AG04450 (cell line): ENCODE measurements at regions of chr12 and their contacts with region 1.

Region 1: GRCh38 chr12:111396726-111397445 is 8.8 kb upstream of the SH2B3 start:
- DNase-seq: peak; percentile 63
- H3K4me3 ChIP-seq: peak overlapping the region; percentile 45
- H3K27ac ChIP-seq: peak overlapping the region; percentile 65
- H3K27me3 ChIP-seq: no peaks in the 10 kb centered on the region
- CTCF ChIP-seq: peak; percentile 99

Region 2: GRCh38 chr12:111093428-111094142 is 303.3 kb before region 1 on chr12:
- CTCF ChIA-PET with region 1: no interaction called
- POLR2A ChIA-PET with region 1: no interaction called
- DNase-seq: no peak
- H3K4me3 ChIP-seq: no peak overlapping the region
- H3K27ac ChIP-seq: no peak overlapping the region
- H3K27me3 ChIP-seq: peaks cover 2% of the 10 kb centered on the region
- CTCF ChIP-seq: no peak

Region 3: DNA sequence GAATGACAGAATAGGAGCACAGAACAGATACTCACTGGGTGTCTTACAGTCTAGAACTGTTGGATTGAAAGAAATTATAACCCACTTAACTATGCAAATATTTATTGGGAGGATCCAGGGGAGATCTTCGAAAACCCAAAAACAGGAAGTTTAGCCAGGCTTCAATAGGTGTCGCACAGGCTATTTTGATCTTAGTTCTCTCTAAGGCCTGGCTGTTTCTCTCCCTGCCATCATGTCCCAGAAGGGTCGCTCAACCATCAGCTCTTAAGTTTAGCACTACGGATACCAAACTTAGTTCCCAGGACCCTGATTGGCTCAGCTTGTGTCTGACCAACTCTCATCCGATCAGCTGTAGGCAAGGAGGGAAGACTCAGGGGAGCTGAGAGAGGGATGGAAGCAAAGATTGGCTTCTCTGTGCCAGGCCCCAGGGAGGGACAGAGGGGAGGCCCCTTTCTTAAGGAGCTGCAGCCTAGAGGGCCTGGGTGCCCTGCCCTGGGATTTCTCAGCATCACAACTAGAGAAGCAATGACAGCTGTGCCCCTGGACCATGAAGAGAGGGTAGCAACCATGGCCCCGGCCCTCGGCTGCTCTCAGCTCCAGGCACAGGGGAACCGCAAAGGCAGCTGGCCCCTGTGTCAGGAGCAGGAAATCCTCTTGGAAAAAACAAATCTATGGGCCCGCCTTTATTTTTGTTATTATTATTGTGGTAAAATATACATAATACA is 41.5 kb before region 1 on chr12:
- CTCF ChIA-PET with region 1: no interaction called
- POLR2A ChIA-PET with region 1: no interaction called
- DNase-seq: no peak
- H3K4me3 ChIP-seq: no peak overlapping the region
- H3K27ac ChIP-seq: no peak overlapping the region
- H3K27me3 ChIP-seq: peaks cover 14% of the 10 kb centered on the region
- CTCF ChIP-seq: no peak

Region 4: GRCh38 chr12:111368788-111369495 is 27.9 kb before region 1 on chr12 and contains the start of gene PHETA1:
- CTCF ChIA-PET with region 1: interaction called, 24 read pairs
- POLR2A ChIA-PET with region 1: interaction called, 3 read pairs
- DNase-seq: peak; percentile 63
- H3K4me3 ChIP-seq: peak within 1 kb of the TSS; percentile 83
- H3K27ac ChIP-seq: no peak within 1 kb of the TSS
- H3K27me3 ChIP-seq: no peaks in the 10 kb centered on the region
- CTCF ChIP-seq: no peak
- polyA plus RNA-seq, gene PHETA1: 3.5 TPM in 2 replicates

Region 5: GRCh38 chr12:111434680-111435338 is 37.9 kb after region 1 on chr12:
- CTCF ChIA-PET with region 1: interaction called, 20 read pairs
- POLR2A ChIA-PET with region 1: no interaction called
- DNase-seq: no peak
- H3K4me3 ChIP-seq: 0 out of 2 replicates have a peak overlapping the region, but pooled peaks have one; percentile 10
- H3K27ac ChIP-seq: peak overlapping the region; percentile 81
- H3K27me3 ChIP-seq: no peaks in the 10 kb centered on the region
- CTCF ChIP-seq: no peak

Region 6: DNA sequence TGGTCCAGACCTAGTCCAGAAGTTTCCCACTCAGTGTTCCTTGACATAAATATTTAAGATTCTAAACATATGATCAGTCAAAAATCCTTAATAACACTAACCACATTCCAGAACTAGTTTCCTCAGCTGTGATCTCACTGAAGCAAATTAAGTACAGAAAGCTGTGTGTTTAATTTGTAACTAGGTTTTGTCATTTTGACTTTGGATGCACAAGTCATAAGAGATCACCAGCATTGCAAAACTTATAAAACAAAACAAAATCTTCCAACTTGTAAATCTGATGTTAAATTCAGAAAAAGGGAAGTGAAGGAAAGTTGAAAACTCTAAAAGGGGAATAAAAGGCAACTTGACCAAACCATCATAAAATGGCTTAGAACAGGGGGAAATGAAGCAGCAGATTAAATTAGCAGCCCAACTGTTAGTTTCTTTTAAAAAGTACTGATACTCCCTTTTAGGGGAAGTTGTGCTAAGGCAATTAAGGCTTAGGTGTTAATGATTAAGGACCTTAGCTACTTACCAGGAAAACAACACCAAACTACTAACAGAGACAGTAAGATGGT is 65.4 kb after region 1 on chr12:
- CTCF ChIA-PET with region 1: interaction called, 349 read pairs
- POLR2A ChIA-PET with region 1: no interaction called
- DNase-seq: peak; percentile 72
- H3K4me3 ChIP-seq: no peak overlapping the region
- H3K27ac ChIP-seq: peak overlapping the region; percentile 59
- H3K27me3 ChIP-seq: no peaks in the 10 kb centered on the region
- CTCF ChIP-seq: no peak

Region 7: DNA sequence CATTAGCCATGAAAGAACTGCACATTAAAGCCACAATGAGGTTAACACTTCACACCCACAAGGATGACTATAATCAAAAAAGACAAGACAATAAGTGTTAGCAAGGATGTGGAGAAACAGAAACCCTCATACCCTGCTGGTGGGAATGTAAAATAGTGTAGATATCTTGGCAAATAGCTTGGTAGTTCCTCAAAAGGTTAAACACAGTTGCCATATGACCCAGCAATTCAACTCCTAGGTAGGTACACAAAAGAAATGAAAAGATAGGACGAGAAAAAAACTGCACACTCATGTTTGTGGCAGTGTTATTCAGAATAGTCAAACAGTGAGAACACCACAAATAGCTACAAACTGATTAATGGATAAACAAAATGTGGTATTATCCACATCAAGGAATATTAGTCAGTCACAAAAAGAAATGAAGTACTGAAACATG is 108.7 kb after region 1 on chr12:
- CTCF ChIA-PET with region 1: interaction called, 15 read pairs
- POLR2A ChIA-PET with region 1: no interaction called
- DNase-seq: no peak
- H3K4me3 ChIP-seq: no peak overlapping the region
- H3K27ac ChIP-seq: no peak overlapping the region
- H3K27me3 ChIP-seq: no peaks in the 10 kb centered on the region
- CTCF ChIP-seq: no peak

Region 8: GRCh38 chr12:111664499-111664898 is 267.6 kb after region 1 on chr12:
- CTCF ChIA-PET with region 1: interaction called, 10 read pairs
- POLR2A ChIA-PET with region 1: no interaction called
- DNase-seq: no peak
- H3K4me3 ChIP-seq: no peak overlapping the region
- H3K27ac ChIP-seq: no peak overlapping the region
- H3K27me3 ChIP-seq: no peaks in the 10 kb centered on the region
- CTCF ChIP-seq: no peak

Region 9: GRCh38 chr12:111775205-111776193 is 378.6 kb after region 1 on chr12:
- CTCF ChIA-PET with region 1: no interaction called
- POLR2A ChIA-PET with region 1: no interaction called
- DNase-seq: peak; percentile 82
- H3K4me3 ChIP-seq: peak overlapping the region; percentile 20
- H3K27ac ChIP-seq: peak overlapping the region; percentile 94
- H3K27me3 ChIP-seq: no peaks in the 10 kb centered on the region
- CTCF ChIP-seq: no peak